PC-3 (cell line): ENCODE measurements at regions of chr1 and their contacts with region 1.

Region 1: GRCh38 chr1:234355782-234356510 is 17.3 kb upstream of the COA6 start:
- DNase-seq: no peak
- ATAC-seq: no peak
- H3K4me3 ChIP-seq: peak overlapping the region; percentile 80
- H3K27ac ChIP-seq: no peak overlapping the region
- H3K4me1 ChIP-seq: peaks cover 6% of the 10 kb centered on the region
- H3K27me3 ChIP-seq: no peaks in the 10 kb centered on the region
- CTCF ChIP-seq: no peak

Region 2: GRCh38 chr1:234342774-234343173 is 13.2 kb before region 1 on chr1:
- CTCF ChIA-PET with region 1: no interaction called
- POLR2A ChIA-PET with region 1: interaction called, 12 read pairs
- intact Hi-C with region 1: no loop called
- DNase-seq: no peak
- ATAC-seq: no peak
- H3K4me3 ChIP-seq: no peak overlapping the region
- H3K27ac ChIP-seq: no peak overlapping the region
- H3K4me1 ChIP-seq: no peaks in the 10 kb centered on the region
- H3K27me3 ChIP-seq: no peaks in the 10 kb centered on the region
- CTCF ChIP-seq: no peak